PC-3 (cell line): ENCODE measurements at regions of chr3 and their contacts with region 1.

Region 1: DNA sequence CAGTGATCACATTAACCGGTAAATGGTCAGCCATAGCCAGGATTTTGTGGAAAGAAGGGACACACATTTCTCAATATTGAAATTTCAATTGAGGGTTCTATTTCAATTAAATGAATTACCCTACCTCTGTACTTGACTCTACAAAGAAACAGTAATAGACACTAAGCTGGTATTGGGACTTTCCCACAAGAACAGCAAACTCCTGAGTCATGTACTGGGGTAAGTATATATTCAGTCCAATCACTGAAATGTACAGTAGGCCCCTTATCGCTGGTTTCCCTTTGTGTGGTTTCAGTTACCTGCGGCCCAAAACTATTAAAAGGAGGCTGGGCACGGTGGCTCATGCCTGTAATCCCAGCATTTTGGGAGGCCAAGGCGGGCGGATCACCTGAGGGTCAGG is 17.6 kb downstream of the ASB14 start:
- DNase-seq: no peak
- ATAC-seq: no peak
- H3K4me3 ChIP-seq: no peak overlapping the region
- H3K27ac ChIP-seq: no peak overlapping the region
- H3K4me1 ChIP-seq: no peaks in the 10 kb centered on the region
- H3K27me3 ChIP-seq: no peaks in the 10 kb centered on the region
- CTCF ChIP-seq: no peak

Region 2: GRCh38 chr3:57120040-57120439 is 154.8 kb before region 1 on chr3:
- CTCF ChIA-PET with region 1: no interaction called
- POLR2A ChIA-PET with region 1: no interaction called
- intact Hi-C with region 1: no loop called
- DNase-seq: no peak
- ATAC-seq: no peak
- H3K4me3 ChIP-seq: no peak overlapping the region
- H3K27ac ChIP-seq: no peak overlapping the region
- H3K4me1 ChIP-seq: no peaks in the 10 kb centered on the region
- H3K27me3 ChIP-seq: no peaks in the 10 kb centered on the region
- CTCF ChIP-seq: no peak

Region 3: DNA sequence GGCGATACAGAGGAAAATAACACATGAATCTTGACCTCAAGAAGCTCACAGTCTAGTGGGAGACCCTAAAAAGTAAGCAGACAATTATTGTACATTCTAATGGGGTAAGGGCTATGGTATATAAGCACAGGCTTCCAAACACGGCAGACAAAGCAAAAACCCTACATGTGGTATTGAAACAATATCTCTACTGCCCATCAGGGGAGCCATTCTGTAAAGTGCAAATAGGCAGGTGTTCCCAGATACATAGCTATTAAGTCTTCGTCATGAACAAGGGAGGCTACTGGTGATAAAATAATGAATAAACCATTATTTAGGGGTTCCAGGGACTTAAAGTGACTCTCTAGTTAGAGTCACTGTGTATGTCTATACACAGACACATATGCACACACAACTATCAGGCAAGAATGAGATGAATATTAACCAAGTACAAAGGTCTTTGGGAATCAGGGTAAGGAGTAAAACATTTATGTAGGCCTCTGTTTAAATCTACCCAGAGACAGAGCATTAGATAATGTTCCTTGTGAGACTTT is 56.3 kb after region 1 on chr3:
- CTCF ChIA-PET with region 1: no interaction called
- POLR2A ChIA-PET with region 1: interaction called, 14 read pairs
- intact Hi-C with region 1: no loop called
- DNase-seq: no peak
- ATAC-seq: 0 out of 2 replicates have a peak, but pooled peaks have one; percentile 45
- H3K4me3 ChIP-seq: no peak overlapping the region
- H3K27ac ChIP-seq: no peak overlapping the region
- H3K4me1 ChIP-seq: no peaks in the 10 kb centered on the region
- H3K27me3 ChIP-seq: peaks cover 14% of the 10 kb centered on the region; the same call in 1 of the 2 replicates
- CTCF ChIP-seq: peak; percentile 33; the same call in 1 of the 2 replicates

Region 4: DNA sequence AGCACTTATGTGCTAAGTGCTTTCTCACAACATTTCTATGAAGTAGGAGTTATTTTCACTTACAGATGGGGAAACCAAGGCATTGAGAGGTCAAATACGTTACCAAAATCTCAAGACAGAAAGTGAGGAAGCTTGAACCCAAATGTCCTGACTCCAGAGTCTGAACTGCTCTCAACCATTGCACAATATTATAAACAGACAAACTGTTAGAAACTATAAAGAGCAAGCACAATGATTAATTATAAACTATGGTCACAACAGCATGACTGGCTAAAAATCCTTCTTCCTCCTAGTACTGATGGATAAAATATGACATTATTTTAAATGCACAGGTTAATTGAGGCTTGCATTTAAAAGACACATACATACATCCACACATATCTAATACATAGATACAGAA is 95.5 kb after region 1 on chr3:
- CTCF ChIA-PET with region 1: no interaction called
- POLR2A ChIA-PET with region 1: no interaction called
- intact Hi-C with region 1: no loop called
- DNase-seq: no peak
- ATAC-seq: no peak
- H3K4me3 ChIP-seq: no peak overlapping the region
- H3K27ac ChIP-seq: no peak overlapping the region
- H3K4me1 ChIP-seq: no peaks in the 10 kb centered on the region
- H3K27me3 ChIP-seq: 0 out of 2 replicates have a peak, but pooled peaks cover 2% of the 10 kb centered on the region
- CTCF ChIP-seq: no peak

Region 5: DNA sequence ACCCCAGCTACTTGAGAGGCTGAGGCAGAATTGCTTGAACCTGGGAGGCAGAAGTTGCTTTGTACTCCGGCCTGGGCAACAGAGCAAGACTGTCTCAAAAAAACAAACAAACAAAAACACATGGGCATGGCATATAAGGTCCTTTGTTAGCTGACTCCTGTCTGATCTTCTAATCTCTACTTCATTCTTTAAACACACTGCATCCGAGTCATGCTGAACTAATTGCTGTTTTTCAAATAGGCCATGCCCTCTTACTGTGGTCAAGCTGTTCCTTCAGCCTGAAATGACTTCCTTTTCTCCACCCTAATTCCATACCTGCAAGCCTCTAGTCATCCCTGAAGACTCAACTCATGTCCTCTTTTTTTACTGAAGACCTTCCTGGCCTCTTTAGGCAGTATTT is 458.9 kb after region 1 on chr3:
- CTCF ChIA-PET with region 1: no interaction called
- POLR2A ChIA-PET with region 1: interaction called, 11 read pairs
- intact Hi-C with region 1: no loop called
- DNase-seq: peak; percentile 37
- ATAC-seq: peak; percentile 58
- H3K4me3 ChIP-seq: no peak overlapping the region
- H3K27ac ChIP-seq: no peak overlapping the region
- H3K4me1 ChIP-seq: no peaks in the 10 kb centered on the region
- H3K27me3 ChIP-seq: no peaks in the 10 kb centered on the region
- CTCF ChIP-seq: no peak